ENCODE measurements at regions of chr18 and their contacts with region 1.

Region 1: GRCh38 chr18:864872-865273 is 39.8 kb upstream of the ADCYAP1 start:
- DNase-seq: peak; percentile 75 to 87
- ATAC-seq: peak; percentile 85
- H3K4me3 ChIP-seq: no peak overlapping the region
- H3K27ac ChIP-seq: no peak overlapping the region
- H3K4me1 ChIP-seq: no peaks in the 10 kb centered on the region
- H3K27me3 ChIP-seq: no peaks in the 10 kb centered on the region

Region 2: DNA sequence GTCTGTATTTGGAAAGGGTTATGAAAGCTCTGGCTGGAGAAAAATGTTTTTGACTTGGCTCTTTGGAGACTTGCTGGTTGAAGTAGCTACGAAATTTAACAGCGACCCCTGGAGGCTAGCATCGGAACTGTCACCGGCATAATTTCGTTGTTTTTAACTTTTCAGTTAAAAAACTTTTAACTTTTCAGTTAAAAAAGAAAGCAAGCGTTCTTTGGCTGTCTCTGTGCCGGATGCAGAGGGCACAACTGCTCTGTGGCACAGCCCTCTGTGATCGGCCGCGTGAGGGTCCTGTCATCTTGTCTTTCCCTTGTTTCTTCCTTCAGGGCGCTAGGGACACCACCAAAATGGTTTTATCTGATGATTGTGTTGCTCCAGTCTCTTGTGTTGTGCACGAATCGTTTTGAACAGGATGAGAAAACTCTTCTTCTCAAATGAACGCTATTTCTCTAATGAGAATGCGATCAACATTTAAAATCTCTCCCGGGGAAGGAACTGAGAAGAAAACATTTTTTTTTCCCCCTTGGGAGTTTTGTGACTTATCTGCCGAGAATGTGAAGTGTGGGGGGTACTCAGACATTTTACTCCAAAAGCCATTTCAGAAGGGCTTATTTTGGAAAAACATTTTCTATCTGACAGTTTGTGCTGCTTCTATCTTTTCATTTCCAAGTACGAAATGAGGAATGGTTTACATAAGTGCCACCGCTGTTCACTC is 96.9 kb after region 1 on chr18:
- intact Hi-C with region 1: loop called in 1 of 2 experiments (anchors 10 kb)
- DNase-seq: peak in 1 of 2 donors; percentile 67
- ATAC-seq: peak; percentile 59
- H3K4me3 ChIP-seq: peak overlapping the region; percentile 58 to 99
- H3K27ac ChIP-seq: peak overlapping the region in 1 of 2 donors; percentile 68
- H3K4me1 ChIP-seq: no peaks in the 10 kb centered on the region
- H3K27me3 ChIP-seq: no peaks in the 10 kb centered on the region

Region 3: DNA sequence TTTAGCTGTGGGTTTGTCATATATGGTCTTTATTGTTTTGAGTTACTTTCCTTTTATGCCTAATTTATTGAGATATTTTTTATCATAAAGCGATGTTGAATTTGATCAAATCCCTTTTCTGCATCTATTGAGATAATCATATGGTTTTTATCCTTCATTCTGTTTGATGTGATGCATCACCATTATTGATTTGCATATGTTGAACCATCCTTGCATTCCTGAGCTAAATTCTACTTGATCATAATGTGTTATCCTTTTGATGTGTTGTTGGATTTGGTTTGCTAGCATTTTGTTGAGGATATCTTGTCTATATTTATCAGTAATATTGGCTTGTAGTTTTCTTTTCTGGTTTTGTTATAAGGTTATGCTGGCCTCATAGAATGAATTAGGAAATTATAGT is 348.3 kb after region 1 on chr18:
- intact Hi-C with region 1: loop called in 1 of 2 experiments (anchors 10 kb)
- DNase-seq: no peak
- ATAC-seq: no peak
- H3K4me3 ChIP-seq: no peak overlapping the region
- H3K27ac ChIP-seq: no peak overlapping the region
- H3K4me1 ChIP-seq: no peaks in the 10 kb centered on the region
- H3K27me3 ChIP-seq: no peaks in the 10 kb centered on the region

Region 4: GRCh38 chr18:1499265-1499664 is 634.4 kb after region 1 on chr18:
- intact Hi-C with region 1: loop called in 1 of 2 experiments (anchors 10 kb)
- DNase-seq: no peak
- ATAC-seq: no peak
- H3K4me3 ChIP-seq: no peak overlapping the region
- H3K27ac ChIP-seq: no peak overlapping the region
- H3K4me1 ChIP-seq: no peaks in the 10 kb centered on the region
- H3K27me3 ChIP-seq: no peaks in the 10 kb centered on the region